CD8-positive, alpha-beta T cell (primary cell): ENCODE measurements at regions of chr19 and their contacts with region 1.

Region 1: DNA sequence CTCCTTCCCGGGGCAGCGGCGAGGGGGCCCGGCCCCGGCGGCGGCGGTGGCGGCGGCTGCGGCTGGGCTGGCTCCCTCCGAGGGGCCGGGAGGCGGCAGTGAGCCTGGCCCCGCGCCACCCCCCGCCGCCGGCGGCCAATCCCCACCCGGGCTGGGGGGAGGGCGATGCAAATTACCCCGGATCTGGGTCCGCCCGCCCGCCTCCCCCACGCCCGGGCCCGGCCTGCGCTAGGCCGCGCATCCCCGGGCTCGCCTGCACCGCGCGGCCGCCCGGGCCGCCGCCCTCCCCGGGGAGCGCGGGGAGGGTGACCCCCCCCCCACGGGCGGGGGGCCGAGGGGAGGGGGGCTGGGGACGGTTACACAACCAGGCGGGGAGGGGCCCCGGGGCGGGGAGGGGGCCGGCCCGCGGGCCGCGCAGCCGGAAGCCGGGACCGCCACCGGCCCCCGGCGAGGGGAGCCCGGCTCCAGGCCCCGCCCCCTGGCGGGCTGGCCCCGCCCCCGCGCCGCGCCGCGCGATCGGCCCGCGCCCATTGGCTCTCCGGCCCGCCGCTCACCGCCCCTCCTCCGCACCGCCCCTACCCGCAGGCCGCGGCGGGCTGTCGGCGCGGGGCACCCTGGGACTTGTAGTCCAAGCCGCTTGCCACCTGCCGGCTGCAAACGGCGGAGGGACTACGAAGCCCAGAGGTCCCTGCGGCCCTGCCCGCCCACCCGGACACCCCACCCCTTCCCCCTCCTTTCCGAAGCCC is 1.1 kb downstream of the ZBTB7A start:
- DNase-seq: peak; percentile 94 to 99 (median 97)
- ATAC-seq: peak; percentile 72
- H3K4me3 ChIP-seq: peak overlapping the region; percentile 86 to 89
- H3K4me3 Mint-ChIP-seq: peak overlapping the region; percentile 73
- H3K27ac ChIP-seq: no peak overlapping the region
- H3K27ac Mint-ChIP-seq: no peak overlapping the region
- H3K4me1 ChIP-seq: peaks cover 58% of the 10 kb centered on the region
- H3K4me1 Mint-ChIP-seq: peaks cover 40% of the 10 kb centered on the region
- H3K27me3 ChIP-seq: no peaks in the 10 kb centered on the region
- H3K27me3 Mint-ChIP-seq: no peaks in the 10 kb centered on the region
- CTCF ChIP-seq: no peak

Region 2: GRCh38 chr19:3505598-3506383 is 559.8 kb before region 1 on chr19 and contains the start of gene FZR1:
- CTCF ChIA-PET with region 1: no interaction called
- POLR2A ChIA-PET with region 1: interaction called, 3 read pairs
- intact Hi-C with region 1: loop called in 1 of 2 experiments (anchors 10 kb)
- DNase-seq: peak; percentile 99 to 100 (median 100)
- ATAC-seq: peak; percentile 85
- H3K4me3 ChIP-seq: peak within 1 kb of the TSS; percentile 76 to 83
- H3K4me3 Mint-ChIP-seq: peak within 1 kb of the TSS; percentile 85
- H3K27ac ChIP-seq: peak within 1 kb of the TSS; percentile 97
- H3K27ac Mint-ChIP-seq: peak within 1 kb of the TSS; percentile 97
- H3K4me1 ChIP-seq: peaks cover 36% of the 10 kb centered on the region
- H3K4me1 Mint-ChIP-seq: peaks cover 48% of the 10 kb centered on the region
- H3K27me3 ChIP-seq: no peaks in the 10 kb centered on the region
- H3K27me3 Mint-ChIP-seq: no peaks in the 10 kb centered on the region
- CTCF ChIP-seq: no peak
- total RNA-seq, gene FZR1: 130 to 142 TPM

Region 3: GRCh38 chr19:3809881-3810707 is 255.5 kb before region 1 on chr19:
- CTCF ChIA-PET with region 1: no interaction called
- POLR2A ChIA-PET with region 1: no interaction called
- intact Hi-C with region 1: no loop called
- DNase-seq: peak in 1 of 9 experiments; percentile 19
- ATAC-seq: no peak
- H3K4me3 ChIP-seq: no peak overlapping the region
- H3K4me3 Mint-ChIP-seq: no peak overlapping the region
- H3K27ac ChIP-seq: peak overlapping the region in 1 of 2 experiments; percentile 25
- H3K27ac Mint-ChIP-seq: no peak overlapping the region
- H3K4me1 ChIP-seq: peaks cover 48% of the 10 kb centered on the region
- H3K4me1 Mint-ChIP-seq: peaks cover 57% of the 10 kb centered on the region
- H3K27me3 ChIP-seq: no peaks in the 10 kb centered on the region
- H3K27me3 Mint-ChIP-seq: no peaks in the 10 kb centered on the region
- CTCF ChIP-seq: no peak

Region 4: GRCh38 chr19:3868770-3869456 is 196.7 kb before region 1 on chr19 and contains the start of gene ZFR2:
- CTCF ChIA-PET with region 1: no interaction called
- POLR2A ChIA-PET with region 1: no interaction called
- intact Hi-C with region 1: no loop called
- DNase-seq: peak in 4 of 9 experiments; percentile 14 to 50 (median 44)
- ATAC-seq: peak; percentile 48
- H3K4me3 ChIP-seq: no peak within 1 kb of the TSS
- H3K4me3 Mint-ChIP-seq: peak within 1 kb of the TSS; percentile 39
- H3K27ac ChIP-seq: no peak within 1 kb of the TSS
- H3K27ac Mint-ChIP-seq: no peak within 1 kb of the TSS
- H3K4me1 ChIP-seq: peaks cover 5% of the 10 kb centered on the region
- H3K4me1 Mint-ChIP-seq: peaks cover 8% of the 10 kb centered on the region
- H3K27me3 ChIP-seq: peaks cover 7 to 12% of the 10 kb centered on the region in 2 experiments
- H3K27me3 Mint-ChIP-seq: peaks cover 42% of the 10 kb centered on the region
- CTCF ChIP-seq: no peak
- total RNA-seq, gene ZFR2: 0.50 to 1.9 TPM

Region 5: GRCh38 chr19:4077882-4078614 is 12.4 kb after region 1 on chr19:
- CTCF ChIA-PET with region 1: no interaction called
- POLR2A ChIA-PET with region 1: interaction called, 4 read pairs
- intact Hi-C with region 1: loop called in 1 of 2 experiments (anchors 1 kb)
- DNase-seq: peak in 6 of 9 experiments; percentile 27 to 70 (median 56)
- ATAC-seq: peak; percentile 73
- H3K4me3 ChIP-seq: peak overlapping the region; percentile 66 to 68
- H3K4me3 Mint-ChIP-seq: peak overlapping the region; percentile 84
- H3K27ac ChIP-seq: peak overlapping the region; percentile 60 to 77
- H3K27ac Mint-ChIP-seq: peak overlapping the region; percentile 88
- H3K4me1 ChIP-seq: peaks cover 44% of the 10 kb centered on the region
- H3K4me1 Mint-ChIP-seq: peaks cover 22% of the 10 kb centered on the region
- H3K27me3 ChIP-seq: no peaks in the 10 kb centered on the region
- H3K27me3 Mint-ChIP-seq: no peaks in the 10 kb centered on the region
- CTCF ChIP-seq: no peak

Region 6: DNA sequence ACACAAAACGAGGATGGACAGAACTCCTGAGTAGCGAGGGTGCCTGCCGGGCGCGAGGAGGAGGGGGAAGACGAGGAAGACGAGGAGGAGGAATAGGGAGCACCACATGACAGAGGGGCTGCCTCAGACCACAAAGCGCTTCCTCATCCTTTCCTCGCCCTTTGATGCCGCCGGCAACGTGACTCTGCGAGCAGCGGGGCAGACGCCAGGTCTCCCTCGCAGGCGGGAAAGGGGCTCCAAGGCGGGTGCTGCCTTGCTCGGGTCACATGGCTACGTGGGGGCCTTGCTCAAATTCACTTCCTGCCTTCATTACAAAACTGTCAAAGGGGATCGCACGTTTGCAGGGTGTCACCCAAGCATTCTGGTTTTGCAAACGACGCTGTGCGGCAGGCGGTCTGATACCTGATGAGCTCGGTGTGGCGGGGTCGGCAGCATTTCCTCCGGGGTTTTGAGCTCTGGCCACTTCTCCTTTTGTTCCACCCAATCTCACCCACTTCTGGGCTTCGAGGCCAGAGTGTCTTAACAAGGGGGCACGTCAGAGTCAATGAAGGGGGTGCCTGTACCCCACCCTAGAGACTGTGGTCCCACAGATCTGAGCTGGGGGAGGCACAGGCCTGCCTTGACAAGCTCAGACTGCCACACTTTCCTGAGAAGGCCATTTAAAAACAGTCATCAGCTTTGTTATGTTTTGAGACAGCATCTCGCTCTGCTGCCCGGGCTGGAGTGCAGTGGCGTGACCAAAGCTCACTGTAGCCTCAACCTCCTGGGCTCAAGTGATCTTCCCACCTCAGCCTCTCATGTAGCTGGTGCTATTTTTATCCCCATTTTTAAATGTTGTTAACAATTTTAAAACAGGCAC is 43.4 kb after region 1 on chr19:
- CTCF ChIA-PET with region 1: interaction called, 3 read pairs
- POLR2A ChIA-PET with region 1: interaction called, 15 read pairs
- intact Hi-C with region 1: loop called (anchors 1 kb)
- DNase-seq: peak; percentile 59 to 96 (median 83)
- ATAC-seq: peak; percentile 55
- H3K4me3 ChIP-seq: peak overlapping the region in 1 of 2 experiments; percentile 22
- H3K4me3 Mint-ChIP-seq: peak overlapping the region; percentile 60
- H3K27ac ChIP-seq: peak overlapping the region; percentile 73 to 74
- H3K27ac Mint-ChIP-seq: peak overlapping the region; percentile 99
- H3K4me1 ChIP-seq: peaks cover 60% of the 10 kb centered on the region
- H3K4me1 Mint-ChIP-seq: peaks cover 68% of the 10 kb centered on the region
- H3K27me3 ChIP-seq: no peaks in the 10 kb centered on the region
- H3K27me3 Mint-ChIP-seq: no peaks in the 10 kb centered on the region
- CTCF ChIP-seq: no peak

Region 7: DNA sequence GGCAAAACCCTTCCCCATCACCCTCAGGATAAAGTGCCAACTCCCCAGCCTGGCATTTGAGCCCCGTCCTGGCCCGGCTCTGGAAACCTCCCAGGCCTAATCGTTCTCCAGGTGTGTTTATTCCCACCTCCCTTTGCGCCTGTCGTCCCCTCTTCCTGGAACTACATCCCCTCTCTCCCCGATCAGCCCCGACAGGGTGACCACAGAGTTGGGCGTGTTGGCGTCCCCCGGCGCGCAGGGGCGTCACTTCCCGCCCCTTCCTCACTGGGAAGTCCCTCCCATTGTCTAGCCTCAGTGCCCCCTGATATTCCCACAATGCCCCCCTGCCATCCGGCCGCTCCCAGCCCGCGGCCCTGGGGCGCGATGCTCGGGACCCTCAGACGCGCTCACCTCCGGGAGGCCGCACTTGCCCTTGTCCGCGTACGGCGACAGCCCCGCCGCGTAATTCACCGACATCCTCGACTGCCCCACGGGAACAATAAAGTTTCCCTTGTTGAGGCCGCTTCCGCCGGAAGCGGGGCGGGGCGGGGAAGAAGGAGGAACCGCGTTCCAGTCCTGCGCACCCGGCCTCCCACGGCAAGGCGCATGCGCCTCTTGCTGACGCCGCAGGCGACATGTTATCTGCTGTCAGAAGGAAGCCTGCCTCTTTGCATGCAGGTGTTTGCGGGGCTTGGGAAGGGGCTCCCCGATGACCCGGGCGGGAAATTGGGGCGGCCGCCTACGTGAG is 116.6 kb after region 1 on chr19 and contains the starts of genes ANKRD24 and SIRT6:
- CTCF ChIA-PET with region 1: no interaction called
- POLR2A ChIA-PET with region 1: no interaction called
- intact Hi-C with region 1: loop called (anchors 1 to 2 kb)
- DNase-seq: peak; percentile 91 to 98 (median 97)
- ATAC-seq: peak; percentile 88
- H3K4me3 ChIP-seq: peak within 1 kb of the TSS; percentile 79 to 95
- H3K4me3 Mint-ChIP-seq: peak within 1 kb of the TSS; percentile 98
- H3K27ac ChIP-seq: peak within 1 kb of the TSS; percentile 74 to 76
- H3K27ac Mint-ChIP-seq: peak within 1 kb of the TSS; percentile 93
- H3K4me1 ChIP-seq: peaks cover 28% of the 10 kb centered on the region
- H3K4me1 Mint-ChIP-seq: peaks cover 31% of the 10 kb centered on the region
- H3K27me3 ChIP-seq: no peaks in the 10 kb centered on the region
- H3K27me3 Mint-ChIP-seq: peaks cover 2% of the 10 kb centered on the region
- CTCF ChIP-seq: no peak
- total RNA-seq, gene ANKRD24: 0.83 to 1.2 TPM
- total RNA-seq, gene SIRT6: 12.0 to 13.0 TPM